Activated CD4-positive, alpha-beta T cell treated with anti-CD3 and anti-CD28 coated beads for 36 hours (primary cell): ENCODE measurements at regions of chr19 and their contacts with region 1.

Region 1: GRCh38 chr19:6862673-6863078 is 24.7 kb upstream of the ADGRE1 start:
- DNase-seq: peak; percentile 96
- ATAC-seq: peak; percentile 83
- H3K4me3 Mint-ChIP-seq: peak overlapping the region; percentile 72
- H3K27ac Mint-ChIP-seq: peak overlapping the region; percentile 89
- H3K4me1 Mint-ChIP-seq: peaks cover 14% of the 10 kb centered on the region
- H3K27me3 Mint-ChIP-seq: no peaks in the 10 kb centered on the region

Region 2: GRCh38 chr19:6362027-6362350 is 500.7 kb before region 1 on chr19:
- CTCF ChIA-PET with region 1: no interaction called
- POLR2A ChIA-PET with region 1: interaction called, 4 read pairs
- intact Hi-C with region 1: loop called in 1 of 2 experiments (anchors 5 kb)
- DNase-seq: no peak
- ATAC-seq: peak; percentile 1
- H3K4me3 Mint-ChIP-seq: peak overlapping the region; percentile 85
- H3K27ac Mint-ChIP-seq: peak overlapping the region; percentile 91
- H3K4me1 Mint-ChIP-seq: peaks cover 16% of the 10 kb centered on the region
- H3K27me3 Mint-ChIP-seq: no peaks in the 10 kb centered on the region

Region 3: DNA sequence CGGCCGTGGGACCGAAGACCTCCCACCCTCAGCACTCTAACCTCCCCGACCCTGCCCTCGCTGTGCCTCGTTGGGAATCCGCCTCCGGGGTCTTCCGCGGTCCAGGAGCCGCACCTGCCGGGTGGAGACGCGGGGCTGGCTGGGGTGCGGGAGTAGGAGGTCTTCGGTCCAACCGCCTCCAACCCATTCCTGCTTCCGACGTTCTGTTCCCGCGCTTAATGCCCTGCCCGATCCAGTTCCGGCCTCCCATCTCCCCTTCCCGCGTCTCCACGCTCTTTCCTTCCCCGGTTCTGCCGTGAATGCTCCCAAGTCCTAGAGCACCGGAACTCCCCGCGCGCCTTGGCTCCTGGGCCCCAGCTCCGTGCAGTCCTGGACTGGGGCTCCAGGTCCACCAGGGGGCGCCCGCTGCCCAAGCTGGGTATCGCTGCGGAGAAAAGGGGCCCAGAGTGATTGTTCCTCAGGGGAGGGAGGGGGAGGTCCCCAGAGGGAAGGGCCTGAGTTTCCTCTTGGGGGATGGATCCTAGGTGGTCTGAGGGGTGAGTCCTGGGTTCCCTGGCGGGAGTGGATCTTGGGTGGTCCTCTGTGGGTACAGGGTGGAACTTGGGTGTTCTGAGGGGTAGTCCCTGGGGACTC is 345.9 kb before region 1 on chr19:
- CTCF ChIA-PET with region 1: interaction called, 23 read pairs
- POLR2A ChIA-PET with region 1: no interaction called
- intact Hi-C with region 1: loop called (anchors 1 kb)
- DNase-seq: peak; percentile 97
- ATAC-seq: peak; percentile 86
- H3K4me3 Mint-ChIP-seq: peak overlapping the region; percentile 79
- H3K27ac Mint-ChIP-seq: peak overlapping the region; percentile 92
- H3K4me1 Mint-ChIP-seq: peaks cover 34% of the 10 kb centered on the region
- H3K27me3 Mint-ChIP-seq: peaks cover 2% of the 10 kb centered on the region

Region 4: GRCh38 chr19:6632002-6632621 is 230.6 kb before region 1 on chr19:
- CTCF ChIA-PET with region 1: interaction called, 7 read pairs
- POLR2A ChIA-PET with region 1: no interaction called
- intact Hi-C with region 1: loop called (anchors 1 to 2 kb)
- DNase-seq: peak; percentile 87
- ATAC-seq: peak; percentile 87
- H3K4me3 Mint-ChIP-seq: no peak overlapping the region
- H3K27ac Mint-ChIP-seq: no peak overlapping the region
- H3K4me1 Mint-ChIP-seq: peaks cover 28% of the 10 kb centered on the region
- H3K27me3 Mint-ChIP-seq: peaks cover 6% of the 10 kb centered on the region

Region 5: DNA sequence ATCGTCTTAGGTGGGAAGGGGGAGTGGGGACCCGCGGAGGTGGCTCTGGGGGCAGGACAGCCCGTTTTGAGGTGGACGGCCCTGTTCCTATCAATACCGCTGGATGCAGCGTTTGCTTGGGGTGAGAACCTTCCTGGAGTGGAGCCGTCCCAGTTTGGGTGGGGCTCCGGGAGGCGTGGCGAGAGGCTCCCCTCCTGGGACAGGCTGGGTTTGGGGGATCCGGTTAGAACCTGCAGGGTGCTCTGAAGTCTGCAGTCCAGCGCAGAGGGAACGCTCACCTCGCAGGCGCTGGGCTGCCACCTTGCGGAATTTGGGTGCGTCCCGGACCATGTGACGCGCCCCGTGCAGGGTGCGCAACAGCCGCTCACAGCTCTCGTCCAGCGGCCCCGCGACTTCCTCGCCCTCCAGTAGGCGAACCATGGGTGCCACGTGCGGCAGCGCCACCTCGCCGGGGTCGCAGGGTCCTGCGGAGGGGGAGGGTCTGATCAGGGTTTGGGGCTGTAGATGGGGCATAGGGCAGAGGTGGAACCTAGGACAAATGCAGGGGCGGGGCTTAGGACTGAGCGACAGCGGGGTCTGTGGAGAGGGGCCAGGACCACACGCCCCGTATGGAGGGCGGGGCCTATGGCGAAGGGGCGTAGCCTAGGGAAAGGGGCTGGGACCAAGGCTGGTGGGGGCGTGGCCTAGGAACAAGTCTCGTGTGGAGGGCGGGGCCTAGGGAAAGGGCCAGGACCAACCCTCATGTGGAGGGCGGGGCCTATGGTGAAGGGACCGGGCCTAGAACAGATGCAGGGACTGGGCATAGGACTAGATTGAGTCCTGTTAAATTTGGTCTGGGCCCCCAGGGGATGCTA is 109.3 kb before region 1 on chr19:
- CTCF ChIA-PET with region 1: no interaction called
- POLR2A ChIA-PET with region 1: interaction called, 3 read pairs
- intact Hi-C with region 1: loop called in 1 of 2 experiments (anchors 1 kb)
- DNase-seq: peak; percentile 93
- ATAC-seq: peak; percentile 94
- H3K4me3 Mint-ChIP-seq: peak overlapping the region; percentile 59
- H3K27ac Mint-ChIP-seq: peak overlapping the region; percentile 47
- H3K4me1 Mint-ChIP-seq: peaks cover 13% of the 10 kb centered on the region
- H3K27me3 Mint-ChIP-seq: no peaks in the 10 kb centered on the region

Region 6: DNA sequence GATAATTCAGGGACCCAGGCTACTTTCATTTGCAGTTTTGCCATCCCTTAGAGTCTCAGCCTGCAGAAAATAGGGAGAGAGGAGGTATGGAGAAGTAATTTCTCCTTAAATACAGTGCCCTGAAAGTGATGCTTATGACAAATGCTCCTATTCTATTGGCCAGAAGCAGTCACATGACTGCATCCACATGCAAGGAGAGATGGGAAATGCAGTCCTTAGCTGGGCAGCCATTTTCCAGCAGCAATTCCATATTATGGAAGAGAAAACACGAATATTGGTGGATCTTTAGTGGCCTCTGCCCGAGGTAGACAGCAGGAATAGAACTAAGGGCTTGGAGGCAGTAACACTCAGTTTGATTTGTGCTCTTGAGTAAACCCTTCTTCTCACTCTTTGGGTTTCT is 50.8 kb before region 1 on chr19:
- CTCF ChIA-PET with region 1: interaction called, 11 read pairs
- POLR2A ChIA-PET with region 1: no interaction called
- intact Hi-C with region 1: no loop called
- DNase-seq: no peak
- ATAC-seq: no peak
- H3K4me3 Mint-ChIP-seq: no peak overlapping the region
- H3K27ac Mint-ChIP-seq: no peak overlapping the region
- H3K4me1 Mint-ChIP-seq: peaks cover 75% of the 10 kb centered on the region
- H3K27me3 Mint-ChIP-seq: no peaks in the 10 kb centered on the region

Region 7: GRCh38 chr19:6834433-6834832 is 28.2 kb before region 1 on chr19:
- CTCF ChIA-PET with region 1: no interaction called
- POLR2A ChIA-PET with region 1: no interaction called
- intact Hi-C with region 1: no loop called
- DNase-seq: no peak
- ATAC-seq: no peak
- H3K4me3 Mint-ChIP-seq: no peak overlapping the region
- H3K27ac Mint-ChIP-seq: no peak overlapping the region
- H3K4me1 Mint-ChIP-seq: peaks cover 24% of the 10 kb centered on the region
- H3K27me3 Mint-ChIP-seq: no peaks in the 10 kb centered on the region

Region 8: DNA sequence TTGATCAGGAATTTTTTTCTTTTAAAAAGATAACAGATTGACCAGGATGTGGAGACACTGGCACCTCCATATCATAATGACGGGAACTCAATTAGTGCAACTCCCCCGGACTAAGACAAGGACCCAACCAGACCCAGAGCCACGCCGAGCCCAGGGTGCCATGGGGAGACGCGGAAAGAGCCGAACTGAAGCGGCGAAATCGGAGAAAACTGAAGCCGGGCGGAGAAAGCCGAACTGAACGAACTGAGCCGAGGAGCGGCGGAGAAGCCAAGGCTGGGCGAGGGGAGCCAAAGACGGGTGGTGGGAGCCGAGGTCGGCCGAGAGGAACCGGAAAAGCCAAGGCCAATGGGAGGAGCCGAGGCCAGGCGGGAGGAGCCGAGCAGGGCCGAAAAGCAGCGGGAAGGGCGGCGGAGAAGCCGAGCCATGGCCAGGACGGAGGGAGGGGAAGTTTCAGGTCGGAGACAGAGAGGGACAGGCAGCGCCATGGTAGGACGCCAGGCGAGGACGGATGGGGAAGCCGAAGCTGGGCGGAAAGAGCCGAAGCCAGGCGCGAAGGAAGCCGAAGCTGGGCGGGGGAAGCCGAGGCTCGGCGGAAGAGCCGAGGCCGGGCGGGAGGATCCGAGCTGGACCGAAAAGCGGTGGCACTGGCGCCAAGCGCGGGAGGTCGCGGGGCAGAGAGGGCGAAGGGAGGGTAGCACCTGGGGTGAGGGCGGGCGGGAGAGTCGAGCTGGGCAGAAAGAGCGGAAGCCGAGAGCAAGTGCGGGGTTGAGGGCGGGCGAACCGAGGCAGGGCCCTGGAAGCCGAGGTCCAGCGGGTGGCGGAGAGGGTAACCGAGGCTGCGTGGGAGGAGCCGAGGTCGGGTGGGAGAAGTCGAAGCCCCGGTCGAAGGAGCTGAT is 236.3 kb after region 1 on chr19:
- CTCF ChIA-PET with region 1: no interaction called
- POLR2A ChIA-PET with region 1: no interaction called
- intact Hi-C with region 1: no loop called
- DNase-seq: peak; percentile 94
- ATAC-seq: peak; percentile 95
- H3K4me3 Mint-ChIP-seq: peak overlapping the region; percentile 90
- H3K27ac Mint-ChIP-seq: peak overlapping the region; percentile 92
- H3K4me1 Mint-ChIP-seq: peaks cover 27% of the 10 kb centered on the region
- H3K27me3 Mint-ChIP-seq: no peaks in the 10 kb centered on the region